Gastrocnemius medialis (tissue), 4 donors: ENCODE measurements at regions of chr7 and their contacts with region 1.

Region 1: DNA sequence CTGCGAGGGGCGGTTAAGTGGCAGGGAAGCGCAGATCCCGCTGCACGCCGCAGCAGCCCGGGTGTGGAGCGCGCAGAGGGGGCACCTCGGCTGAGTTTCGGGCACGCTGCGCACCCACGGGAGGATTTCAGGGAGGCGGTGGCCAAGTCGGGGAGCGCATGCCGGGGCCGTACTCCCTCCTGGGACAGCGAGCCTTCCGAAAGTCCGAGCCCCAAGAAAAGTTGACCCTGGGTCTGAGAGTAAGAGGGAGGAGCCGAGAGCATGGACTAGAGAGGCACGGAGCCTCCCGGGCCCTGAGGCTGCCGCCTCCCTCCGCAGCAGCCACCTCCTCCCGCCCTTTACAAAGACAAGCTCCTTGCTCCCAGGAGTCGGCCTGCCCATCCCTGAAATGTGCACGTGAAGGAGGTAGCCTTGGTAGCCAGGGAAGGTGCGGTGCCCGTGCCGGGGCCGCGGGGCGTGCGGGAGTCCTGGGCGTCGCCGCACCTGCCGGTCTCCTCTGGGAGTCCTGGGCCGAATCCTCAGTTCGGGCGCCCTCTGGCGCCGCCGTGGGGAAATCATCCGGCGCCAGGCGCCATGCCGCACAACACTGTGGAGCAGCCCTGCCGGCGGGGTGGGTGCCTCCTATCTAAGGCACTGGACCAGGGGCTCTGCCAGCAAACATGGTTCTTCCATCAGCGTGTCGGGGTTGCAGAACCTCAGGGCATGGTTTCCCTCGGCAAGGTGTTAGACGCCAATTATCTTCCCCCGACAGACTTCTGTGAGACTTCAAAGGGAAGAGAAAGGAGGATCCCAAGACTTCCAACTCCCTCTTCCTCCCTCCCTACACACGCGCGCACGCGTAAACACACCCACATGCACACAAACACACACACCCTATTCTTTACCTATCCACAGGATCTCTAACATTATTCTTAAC is 104.0 kb downstream of the TRIL start:
- DNase-seq: peak; percentile 39 to 72
- ATAC-seq: peak; percentile 96 to 98
- H3K4me3 ChIP-seq: peak overlapping the region; percentile 54 to 76 (median 64)
- H3K27ac ChIP-seq: peak overlapping the region in 1 of 4 donors; percentile 38
- H3K4me1 ChIP-seq: peaks cover 0 to 7% of the 10 kb centered on the region in 2 donors
- H3K27me3 ChIP-seq: peaks cover 0 to 5% (median 0%) of the 10 kb centered on the region in 3 donors
- CTCF ChIP-seq: peak; percentile 84 to 94 (median 90)
- POLR2A ChIP-seq: no peak

Region 2: DNA sequence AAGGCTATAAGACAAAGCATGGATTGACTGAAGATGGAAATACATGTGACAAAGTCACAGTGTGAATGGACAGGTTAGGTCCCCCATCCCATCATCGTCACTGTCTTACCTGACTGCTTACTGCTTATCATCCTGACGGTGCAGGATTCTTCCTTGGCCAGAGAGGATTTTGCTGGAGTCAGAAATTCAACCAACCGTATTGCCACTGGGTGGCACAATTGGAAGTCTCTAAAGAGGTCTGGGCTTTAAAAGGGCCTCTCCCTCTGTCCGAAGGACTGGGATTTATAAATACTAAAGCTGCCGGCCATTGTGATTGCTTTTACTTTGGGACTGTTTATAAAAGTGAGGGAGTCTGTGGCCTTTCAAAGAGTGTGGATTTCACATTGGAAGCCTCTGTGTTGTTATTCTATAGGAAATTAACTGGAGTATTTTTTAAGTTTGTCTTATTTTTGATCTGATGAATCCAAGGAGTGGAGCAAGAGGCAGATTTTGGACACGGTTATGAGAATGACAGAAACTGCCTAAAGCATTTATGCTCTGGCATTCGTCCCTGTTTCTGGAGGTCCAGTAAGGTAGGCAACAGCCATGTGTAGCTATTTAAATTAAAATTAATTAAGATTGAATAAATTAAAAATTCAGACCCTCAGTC is 555.1 kb before region 1 on chr7:
- in situ Hi-C with region 1: loop called in 1 of 4 experiments (anchors 10 kb)
- intact Hi-C with region 1: loop called (anchors 1 kb)
- DNase-seq: no peak
- ATAC-seq: peak; percentile 54 to 56
- H3K4me3 ChIP-seq: no peak overlapping the region
- H3K27ac ChIP-seq: no peak overlapping the region
- H3K4me1 ChIP-seq: no peaks in the 10 kb centered on the region
- H3K27me3 ChIP-seq: no peaks in the 10 kb centered on the region
- CTCF ChIP-seq: peak in 2 of 5 experiments; percentile 20 to 34
- POLR2A ChIP-seq: no peak

Region 3: GRCh38 chr7:28615091-28615490 is 239.0 kb before region 1 on chr7:
- in situ Hi-C with region 1: loop called in 1 of 4 experiments (anchors 25 kb)
- intact Hi-C with region 1: loop called (anchors 5 kb)
- DNase-seq: no peak
- ATAC-seq: peak; percentile 51 to 59
- H3K4me3 ChIP-seq: no peak overlapping the region
- H3K27ac ChIP-seq: no peak overlapping the region
- H3K4me1 ChIP-seq: no peaks in the 10 kb centered on the region
- H3K27me3 ChIP-seq: no peaks in the 10 kb centered on the region
- CTCF ChIP-seq: peak in 3 of 5 experiments; percentile 13 to 38 (median 29)
- POLR2A ChIP-seq: no peak

Region 4: GRCh38 chr7:29345600-29345999 is 491.5 kb after region 1 on chr7:
- in situ Hi-C with region 1: no loop called
- intact Hi-C with region 1: no loop called
- DNase-seq: no peak
- ATAC-seq: no peak
- H3K4me3 ChIP-seq: no peak overlapping the region
- H3K27ac ChIP-seq: no peak overlapping the region
- H3K4me1 ChIP-seq: no peaks in the 10 kb centered on the region
- H3K27me3 ChIP-seq: no peaks in the 10 kb centered on the region
- CTCF ChIP-seq: peak in 3 of 5 experiments; percentile 10 to 40 (median 22)
- POLR2A ChIP-seq: no peak